Transverse colon (tissue), 4 donors: ENCODE measurements at regions of chr3 and their contacts with region 1.

Region 1: DNA sequence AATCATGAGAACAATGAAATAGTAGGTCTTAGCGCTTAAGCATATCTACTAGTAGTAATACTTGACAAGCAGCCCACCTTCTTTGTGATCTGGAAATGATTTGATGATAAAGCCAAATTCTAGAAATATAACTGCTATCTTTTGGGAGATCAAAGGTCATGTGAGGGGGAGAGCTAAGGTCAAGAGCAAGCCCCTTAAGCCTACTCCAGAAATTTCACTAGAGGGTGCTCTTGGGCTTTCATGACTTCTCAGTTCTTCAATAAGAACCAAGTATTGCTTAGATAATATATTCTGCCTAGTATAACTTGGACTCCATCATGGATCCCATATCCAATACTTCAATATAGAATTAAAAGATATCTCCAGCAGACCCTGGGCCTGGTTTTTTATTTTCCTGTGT is 319.6 kb downstream of the ZBTB20 start:
- DNase-seq: no peak
- H3K4me3 ChIP-seq: no peak overlapping the region
- H3K27ac ChIP-seq: no peak overlapping the region
- H3K4me1 ChIP-seq: no peaks in the 10 kb centered on the region
- H3K27me3 ChIP-seq: no peaks in the 10 kb centered on the region
- CTCF ChIP-seq: peak; percentile 37 to 54 (median 47)
- EP300 ChIP-seq: no peak
- POLR2A ChIP-seq: no peak

Region 2: GRCh38 chr3:115092220-115092791 is 264.8 kb after region 1 on chr3:
- in situ Hi-C with region 1: loop called in 1 of 4 experiments (anchors 25 kb)
- intact Hi-C with region 1: no loop called
- DNase-seq: peak; percentile 51
- H3K4me3 ChIP-seq: no peak overlapping the region
- H3K27ac ChIP-seq: no peak overlapping the region
- H3K4me1 ChIP-seq: peaks cover 0 to 40% (median 13%) of the 10 kb centered on the region in 4 donors
- H3K27me3 ChIP-seq: no peaks in the 10 kb centered on the region
- CTCF ChIP-seq: peak; percentile 56 to 73 (median 61)
- EP300 ChIP-seq: no peak
- POLR2A ChIP-seq: no peak